Heart right ventricle (tissue), 16 donors: ENCODE measurements at regions of chr2 and their contacts with region 1.

Region 1: DNA sequence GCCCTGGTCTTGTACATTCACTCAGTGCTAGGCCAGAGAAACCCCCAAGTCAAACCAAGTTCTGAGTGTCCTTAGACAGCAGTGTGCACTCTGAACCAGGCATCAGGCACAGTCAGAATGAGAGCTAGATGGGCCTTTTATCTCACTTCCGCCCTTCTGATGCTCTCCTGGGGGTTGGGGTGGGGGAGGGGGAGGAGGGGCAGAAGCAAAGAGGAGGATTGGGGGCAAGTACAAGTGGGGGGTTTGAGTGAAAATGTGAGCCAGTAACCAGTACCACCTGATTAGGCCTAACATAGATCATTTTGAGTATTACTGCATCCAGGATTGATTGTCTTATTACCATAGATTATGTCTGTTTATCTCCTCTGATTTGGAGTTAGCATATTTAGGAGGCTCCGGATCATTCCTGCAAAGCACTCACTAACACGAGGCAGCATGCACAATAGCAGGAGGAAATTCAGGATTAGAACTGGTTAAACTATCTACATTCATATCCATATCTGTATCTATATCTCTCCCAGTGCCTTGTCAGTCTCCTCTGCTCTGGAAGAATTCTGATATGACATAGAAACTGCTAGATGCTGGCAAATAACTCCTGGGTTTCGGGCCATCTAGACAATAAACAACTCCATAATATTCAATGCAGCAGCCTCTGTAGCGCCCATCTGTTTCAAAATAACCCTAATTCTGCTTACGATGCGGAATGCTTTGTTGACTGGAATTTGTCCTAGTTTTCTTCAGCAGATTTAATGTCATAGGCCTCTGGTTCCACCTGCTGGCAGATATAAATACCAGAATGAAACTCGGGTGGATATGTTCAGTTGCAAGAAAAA is 149.1 kb downstream of the RHBDD1 start:
- DNase-seq: peak in 1 of 2 donors; percentile 44
- ATAC-seq: peak; percentile 53 to 78 (median 72)
- H3K4me3 ChIP-seq: no peak overlapping the region
- H3K27ac ChIP-seq: peak overlapping the region in 2 of 10 donors; percentile 9 to 34
- H3K4me1 ChIP-seq: peaks cover 0 to 25% (median 6%) of the 10 kb centered on the region in 9 donors
- H3K27me3 ChIP-seq: no peaks in the 10 kb centered on the region
- CTCF ChIP-seq: peak; percentile 57 to 82 (median 70)

Region 2: DNA sequence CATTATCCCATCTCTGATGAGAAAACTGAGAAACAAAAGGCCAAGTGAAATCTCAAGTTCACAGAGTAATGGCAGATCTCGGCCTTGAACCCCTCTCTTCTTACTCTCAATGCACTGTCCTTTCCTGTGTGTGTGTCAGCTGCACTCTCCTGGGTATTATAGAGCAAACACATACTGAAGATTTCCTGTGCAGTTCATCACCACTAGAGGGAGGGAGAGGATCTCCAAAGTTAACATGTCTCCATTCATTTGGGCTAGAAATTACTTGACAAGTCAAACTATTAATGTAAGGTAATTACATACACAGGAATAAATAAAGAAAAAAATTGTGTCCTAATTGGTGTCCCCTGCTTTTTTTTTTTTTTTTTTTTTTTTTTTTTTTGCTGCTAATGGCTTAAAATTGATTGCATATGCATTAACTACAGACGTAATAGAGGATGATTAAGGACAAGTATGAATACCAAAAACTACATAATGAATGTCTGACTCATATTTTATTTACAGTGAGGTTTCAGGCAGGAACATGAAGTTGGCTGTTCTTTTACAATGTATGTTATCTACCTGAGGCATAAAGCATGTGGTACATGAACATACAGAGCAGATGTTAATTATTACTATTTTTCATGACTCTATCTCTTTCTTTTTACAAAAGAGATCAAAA is 1316.2 kb before region 1 on chr2:
- intact Hi-C with region 1: loop called in 9 of 10 experiments (anchors 2 to 5 kb)
- DNase-seq: peak in 1 of 2 donors; percentile 6
- ATAC-seq: peak in 3 of 8 donors; percentile 53 to 70 (median 64)
- H3K4me3 ChIP-seq: no peak overlapping the region
- H3K27ac ChIP-seq: no peak overlapping the region
- H3K4me1 ChIP-seq: no peaks in the 10 kb centered on the region
- H3K27me3 ChIP-seq: peaks cover 0 to 11% (median 0%) of the 10 kb centered on the region in 7 donors
- CTCF ChIP-seq: peak in 8 of 9 donors; percentile 26 to 72 (median 64)

Region 3: DNA sequence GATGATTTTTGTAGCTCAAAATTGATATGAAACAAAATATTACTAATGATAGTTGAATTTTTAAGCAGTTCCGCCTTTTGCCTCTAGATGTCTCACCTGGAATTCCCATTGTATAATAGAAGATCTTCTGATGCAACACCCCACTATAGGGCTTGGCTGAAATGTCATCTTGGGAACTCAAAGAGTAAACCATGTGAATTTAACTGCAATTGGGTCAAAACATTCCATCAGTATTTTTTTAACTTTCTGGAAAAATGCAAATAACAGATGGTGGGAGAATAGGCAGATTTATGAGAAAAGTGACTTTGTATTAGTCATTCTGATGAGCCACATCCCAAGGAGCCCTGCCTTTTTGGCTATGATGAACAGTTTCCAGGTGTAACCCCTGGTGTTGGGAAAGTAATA is 1095.5 kb before region 1 on chr2:
- intact Hi-C with region 1: loop called in 7 of 10 experiments (anchors 2 to 10 kb)
- DNase-seq: peak in 1 of 2 donors; percentile 5
- ATAC-seq: peak in 3 of 8 donors; percentile 47 to 65 (median 51)
- H3K4me3 ChIP-seq: no peak overlapping the region
- H3K27ac ChIP-seq: no peak overlapping the region
- H3K4me1 ChIP-seq: peaks cover 0 to 5% (median 0%) of the 10 kb centered on the region in 9 donors
- H3K27me3 ChIP-seq: no peaks in the 10 kb centered on the region
- CTCF ChIP-seq: peak; percentile 42 to 85 (median 77)

Region 4: GRCh38 chr2:226215902-226216503 is 769.0 kb before region 1 on chr2:
- intact Hi-C with region 1: loop called in 1 of 10 experiments (anchors 10 kb)
- DNase-seq: peak in 1 of 2 donors; percentile 53
- ATAC-seq: peak in 6 of 8 donors; percentile 72 to 86 (median 76)
- H3K4me3 ChIP-seq: no peak overlapping the region
- H3K27ac ChIP-seq: no peak overlapping the region
- H3K4me1 ChIP-seq: peaks cover 0 to 17% (median 10%) of the 10 kb centered on the region in 9 donors
- H3K27me3 ChIP-seq: no peaks in the 10 kb centered on the region
- CTCF ChIP-seq: peak in 8 of 9 donors; percentile 32 to 77 (median 68)

Region 5: GRCh38 chr2:226813148-226813701 is 171.7 kb before region 1 on chr2:
- intact Hi-C with region 1: loop called in 5 of 10 experiments (anchors 5 to 10 kb)
- DNase-seq: no peak
- ATAC-seq: no peak
- H3K4me3 ChIP-seq: no peak overlapping the region
- H3K27ac ChIP-seq: no peak overlapping the region
- H3K4me1 ChIP-seq: no peaks in the 10 kb centered on the region
- H3K27me3 ChIP-seq: peaks cover 0 to 4% (median 0%) of the 10 kb centered on the region in 7 donors
- CTCF ChIP-seq: peak in 2 of 9 donors; percentile 22 to 26

Region 6: GRCh38 chr2:226835796-226836547 is 149.0 kb before region 1 on chr2 and contains the start of gene RHBDD1:
- intact Hi-C with region 1: loop called in 2 of 10 experiments (anchors 10 kb)
- DNase-seq: peak; percentile 94 to 95
- ATAC-seq: peak; percentile 99 to 100 (median 99)
- H3K4me3 ChIP-seq: peak within 1 kb of the TSS; percentile 61 to 89 (median 78)
- H3K27ac ChIP-seq: peak within 1 kb of the TSS; percentile 88 to 98 (median 96)
- H3K4me1 ChIP-seq: peaks cover 0 to 35% (median 22%) of the 10 kb centered on the region in 9 donors
- H3K27me3 ChIP-seq: no peaks in the 10 kb centered on the region
- CTCF ChIP-seq: no peak
- total RNA-seq, gene RHBDD1: 28.3 to 57.1 (median 39.1) TPM